ENCODE measurements at regions of chr3 and their contacts with region 1.

Region 1: GRCh38 chr3:46705022-46705530 is 3.9 kb downstream of the TMIE start:
- H3K4me3 Mint-ChIP-seq: no peak overlapping the region
- H3K27ac Mint-ChIP-seq: no peak overlapping the region
- H3K4me1 Mint-ChIP-seq: peaks cover 21% of the 10 kb centered on the region
- H3K27me3 Mint-ChIP-seq: peaks cover 68% of the 10 kb centered on the region

Region 2: DNA sequence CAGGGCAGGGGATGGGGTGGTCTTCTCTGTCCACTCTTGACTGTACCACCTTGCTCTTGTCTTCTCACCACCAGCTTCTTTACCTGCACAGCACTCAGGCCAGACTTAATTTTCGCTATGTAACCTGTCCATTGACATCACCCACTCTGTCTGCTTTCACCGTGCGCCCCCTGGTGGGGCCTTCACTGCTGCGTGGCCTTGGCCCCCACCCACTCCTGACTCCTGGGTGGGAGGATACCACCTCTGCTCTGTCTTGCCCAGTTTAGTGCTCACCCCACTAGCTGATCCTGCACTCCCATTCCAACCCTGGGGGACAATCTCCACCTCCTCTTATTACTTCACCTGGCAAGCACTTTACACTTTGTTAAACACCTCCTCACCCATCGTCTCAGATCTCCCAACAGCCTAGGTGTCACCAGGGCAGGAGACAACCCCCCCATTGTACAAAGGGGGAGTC is 190.2 kb after region 1 on chr3:
- intact Hi-C with region 1: loop called (anchors 1 kb)
- H3K4me3 Mint-ChIP-seq: no peak overlapping the region
- H3K27ac Mint-ChIP-seq: no peak overlapping the region
- H3K4me1 Mint-ChIP-seq: peaks cover 36% of the 10 kb centered on the region
- H3K27me3 Mint-ChIP-seq: peaks cover 85% of the 10 kb centered on the region

Region 3: DNA sequence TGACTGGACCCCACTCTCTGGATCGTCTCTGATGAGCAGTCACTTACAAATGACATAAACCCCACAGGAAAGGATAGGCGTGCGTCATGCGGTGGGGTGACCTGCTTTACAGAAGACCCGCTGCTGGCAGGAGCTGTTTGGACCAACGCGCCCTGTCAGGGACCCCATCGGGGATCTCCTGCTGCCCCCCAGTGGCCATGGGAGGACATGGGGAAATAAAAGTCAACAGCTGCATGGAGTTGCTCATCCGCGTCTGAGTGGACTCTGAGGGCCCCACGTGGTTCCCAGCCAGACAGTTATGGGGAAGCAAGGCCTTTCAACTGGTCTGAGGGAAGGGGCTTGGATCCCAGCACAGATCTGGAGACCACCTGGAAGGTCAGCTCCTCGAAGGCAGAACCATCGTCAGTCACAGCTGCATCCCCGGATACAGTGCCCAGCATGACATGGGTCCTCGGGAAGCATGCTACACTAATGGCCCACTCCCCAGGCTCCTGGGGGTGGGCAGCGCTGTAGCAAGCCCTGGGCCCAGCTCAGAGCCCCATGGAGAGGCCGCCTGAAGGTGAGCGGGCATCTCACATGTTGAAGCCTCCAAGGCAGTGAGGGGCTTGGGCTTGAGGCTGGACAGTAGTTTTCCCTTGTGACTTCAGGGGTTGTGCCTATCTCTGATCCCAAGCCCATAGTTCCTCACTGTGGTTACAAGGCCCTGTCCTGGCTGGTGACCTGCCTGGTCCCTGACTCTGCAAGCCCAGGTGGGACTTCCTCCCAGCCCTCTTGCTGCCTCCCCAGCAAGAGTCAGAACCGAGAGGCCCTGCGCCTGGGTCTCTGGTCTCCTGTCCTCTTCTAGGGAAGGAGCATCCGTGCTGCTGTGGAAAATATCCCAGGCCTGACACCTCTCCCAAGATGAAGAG is 204.7 kb after region 1 on chr3:
- intact Hi-C with region 1: loop called (anchors 1 kb)
- H3K4me3 Mint-ChIP-seq: no peak overlapping the region
- H3K27ac Mint-ChIP-seq: no peak overlapping the region
- H3K4me1 Mint-ChIP-seq: peaks cover 5% of the 10 kb centered on the region
- H3K27me3 Mint-ChIP-seq: peaks cover 3% of the 10 kb centered on the region

Region 4: DNA sequence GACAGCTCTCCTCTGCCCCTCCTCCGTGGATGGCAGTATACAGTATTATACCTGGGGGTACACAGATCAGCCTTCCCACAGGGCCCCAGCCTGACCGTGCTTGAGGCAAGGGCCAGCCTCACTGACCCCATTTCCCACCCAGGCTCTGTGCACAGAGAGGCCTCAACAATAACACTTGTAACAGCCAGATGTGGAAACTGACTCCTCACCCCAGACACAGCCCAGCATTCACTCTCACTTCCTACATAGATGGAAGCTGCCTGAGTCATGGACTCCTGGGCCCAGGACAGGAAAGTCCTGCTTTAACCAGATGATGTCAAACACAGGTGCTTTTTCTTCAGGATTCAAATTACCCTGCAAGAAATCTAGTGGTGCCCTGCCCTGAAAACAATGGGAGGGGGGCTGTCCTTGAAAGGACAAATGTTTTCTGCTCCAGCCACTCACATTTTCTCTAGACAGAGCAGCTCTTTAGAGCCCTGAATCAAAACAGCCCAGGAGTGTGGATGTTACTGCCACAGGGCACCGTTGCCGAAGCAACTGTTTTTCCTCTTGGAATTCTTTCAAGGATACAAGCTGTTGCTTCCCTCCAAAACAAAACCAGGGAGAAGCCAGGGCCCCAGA is 255.1 kb after region 1 on chr3:
- intact Hi-C with region 1: no loop called
- H3K4me3 Mint-ChIP-seq: peak overlapping the region; percentile 11
- H3K27ac Mint-ChIP-seq: peak overlapping the region; percentile 79
- H3K4me1 Mint-ChIP-seq: peaks cover 90% of the 10 kb centered on the region
- H3K27me3 Mint-ChIP-seq: no peaks in the 10 kb centered on the region

Region 5: GRCh38 chr3:46998121-46998851 is 293.2 kb after region 1 on chr3:
- intact Hi-C with region 1: loop called (anchors 10 kb)
- H3K4me3 Mint-ChIP-seq: no peak overlapping the region
- H3K27ac Mint-ChIP-seq: no peak overlapping the region
- H3K4me1 Mint-ChIP-seq: peaks cover 31% of the 10 kb centered on the region
- H3K27me3 Mint-ChIP-seq: no peaks in the 10 kb centered on the region

Measured in dendritic cell treated with granulocyte-macrophage colony-stimulating factor and Interleukin-4, amounts not matched to agents 40 ng/mL and 50 ng/mL, for 4 days (primary cell).